Naive thymus-derived CD4-positive, alpha-beta T cell (primary cell): ENCODE measurements at regions of chr18 and their contacts with region 1.

Region 1: GRCh38 chr18:44887227-44887631 is 206.5 kb downstream of the SETBP1 start:
- DNase-seq: peak in 1 of 9 donors; percentile 54
- ATAC-seq: peak; percentile 79
- H3K4me3 ChIP-seq: no peak overlapping the region
- H3K4me3 Mint-ChIP-seq: no peak overlapping the region
- H3K27ac ChIP-seq: no peak overlapping the region
- H3K27ac Mint-ChIP-seq: peak overlapping the region in 1 of 9 donors; percentile 79
- H3K4me1 ChIP-seq: no peaks in the 10 kb centered on the region
- H3K4me1 Mint-ChIP-seq: peaks cover 0 to 12% (median 0%) of the 10 kb centered on the region in 7 donors
- H3K27me3 ChIP-seq: no peaks in the 10 kb centered on the region
- H3K27me3 Mint-ChIP-seq: peaks cover 0 to 4% (median 0%) of the 10 kb centered on the region in 5 donors

Region 2: DNA sequence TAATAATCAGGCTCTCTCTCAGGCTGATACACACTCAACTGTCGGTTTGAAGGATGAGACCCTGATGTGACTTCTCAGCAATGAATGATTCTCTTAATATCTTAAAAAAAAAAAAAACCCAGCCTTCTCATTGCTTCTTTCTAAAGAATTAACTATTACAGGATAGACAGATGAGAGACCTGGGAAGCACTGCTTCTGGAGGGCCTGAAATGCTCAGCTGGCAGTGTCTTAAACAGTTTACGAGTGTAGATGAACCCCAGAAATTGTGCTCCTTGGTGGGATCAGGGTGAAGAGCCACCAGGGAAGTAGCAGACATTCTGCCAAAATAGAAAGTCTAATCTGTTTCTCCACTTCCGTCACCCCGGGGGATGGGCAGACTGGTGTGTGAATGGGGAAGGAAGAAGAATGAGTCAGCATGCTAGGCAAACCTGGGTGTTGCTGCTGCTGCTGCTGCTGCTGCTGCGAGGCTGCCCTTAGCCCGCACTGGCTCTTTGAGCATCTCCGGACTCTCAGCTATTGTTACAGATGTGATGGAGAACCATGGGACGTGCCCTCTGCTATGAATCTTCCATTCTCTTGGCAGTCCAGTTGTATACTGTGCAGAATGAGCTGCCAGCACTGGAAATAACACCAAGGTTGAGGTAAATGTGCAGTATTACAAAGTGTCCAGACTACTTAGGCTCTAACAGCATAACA is 48.1 kb before region 1 on chr18:
- CTCF ChIA-PET with region 1: no interaction called
- POLR2A ChIA-PET with region 1: no interaction called
- intact Hi-C with region 1: loop called in 1 of 2 experiments (anchors 5 kb)
- DNase-seq: peak in 4 of 9 donors; percentile 2 to 66 (median 20)
- ATAC-seq: peak; percentile 90
- H3K4me3 ChIP-seq: no peak overlapping the region
- H3K4me3 Mint-ChIP-seq: peak overlapping the region in 1 of 10 donors; percentile 60
- H3K27ac ChIP-seq: no peak overlapping the region
- H3K27ac Mint-ChIP-seq: peak overlapping the region in 3 of 9 donors; percentile 2 to 30 (median 14)
- H3K4me1 ChIP-seq: peaks cover 6 to 18% of the 10 kb centered on the region in 2 donors
- H3K4me1 Mint-ChIP-seq: peaks cover 0 to 35% (median 11%) of the 10 kb centered on the region in 7 donors
- H3K27me3 ChIP-seq: no peaks in the 10 kb centered on the region
- H3K27me3 Mint-ChIP-seq: peaks cover 0 to 15% (median 4%) of the 10 kb centered on the region in 5 donors

Region 3: DNA sequence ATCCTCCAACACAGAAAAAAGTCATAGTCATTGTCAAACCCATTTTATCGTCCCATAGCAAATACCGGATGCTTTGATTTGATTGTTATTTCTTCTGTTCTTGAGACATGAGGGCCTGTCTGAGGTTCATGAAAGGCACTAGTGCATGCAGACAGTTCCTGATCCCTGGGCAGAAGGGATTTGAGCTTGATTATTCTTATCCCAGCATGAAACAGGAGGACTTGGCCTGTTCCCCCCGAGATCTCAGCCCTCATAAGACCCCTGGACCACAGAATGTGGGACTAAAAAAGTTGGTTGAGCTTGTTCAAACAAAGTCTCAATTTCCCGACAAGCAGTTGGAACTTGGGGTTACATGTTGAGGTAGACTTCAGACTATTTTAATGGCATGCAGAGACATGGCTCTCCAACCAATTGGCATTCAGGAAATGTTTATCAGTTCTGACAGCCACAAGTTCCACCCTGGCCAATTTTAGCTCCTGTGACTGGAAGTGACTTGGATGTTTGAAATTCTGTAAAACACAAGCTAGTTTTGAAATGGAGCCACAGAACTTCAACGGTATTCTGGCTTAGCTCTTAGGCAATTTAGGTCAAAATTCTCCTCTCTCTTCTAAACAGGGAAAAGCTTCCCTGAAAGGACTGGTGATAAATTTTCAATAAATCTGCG is 361.1 kb after region 1 on chr18:
- CTCF ChIA-PET with region 1: no interaction called
- POLR2A ChIA-PET with region 1: no interaction called
- intact Hi-C with region 1: no loop called
- DNase-seq: no peak
- ATAC-seq: no peak
- H3K4me3 ChIP-seq: no peak overlapping the region
- H3K4me3 Mint-ChIP-seq: no peak overlapping the region
- H3K27ac ChIP-seq: no peak overlapping the region
- H3K27ac Mint-ChIP-seq: no peak overlapping the region
- H3K4me1 ChIP-seq: no peaks in the 10 kb centered on the region
- H3K4me1 Mint-ChIP-seq: peaks cover 0 to 3% (median 0%) of the 10 kb centered on the region in 7 donors
- H3K27me3 ChIP-seq: no peaks in the 10 kb centered on the region
- H3K27me3 Mint-ChIP-seq: peaks cover 0 to 5% (median 3%) of the 10 kb centered on the region in 5 donors